ENCODE measurements at regions of chr19 and their contacts with region 1.

Region 1: DNA sequence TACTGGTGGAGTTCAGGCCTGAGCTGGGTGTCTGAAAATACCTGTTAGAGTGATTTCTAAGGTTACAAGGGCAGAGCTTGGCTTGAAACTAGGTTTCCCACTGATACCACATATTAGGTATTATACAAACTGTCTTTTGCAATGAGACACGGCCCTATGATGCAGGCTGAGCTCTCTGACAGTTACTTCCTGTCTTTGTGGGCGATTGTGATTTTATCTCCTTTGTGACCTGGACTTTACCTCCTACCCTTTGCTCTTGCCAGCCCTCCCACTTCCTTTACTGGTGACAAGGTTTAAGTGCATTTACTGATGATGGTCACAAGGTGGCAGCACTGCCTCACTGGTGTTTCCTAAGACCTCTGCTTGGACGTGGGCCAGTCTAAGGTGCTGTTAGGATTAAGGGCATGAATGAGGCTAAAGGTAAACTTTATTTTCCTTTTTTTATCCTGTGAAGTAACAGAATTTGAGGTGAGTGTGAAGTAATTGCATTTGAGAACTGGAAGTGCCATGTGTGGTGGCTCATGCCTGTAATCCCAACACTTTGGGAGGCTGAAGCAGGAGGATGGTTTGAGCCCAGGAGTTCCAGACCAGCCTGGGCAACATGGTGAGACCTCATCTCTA is 7.7 kb upstream of the CXCL17 start:
- DNase-seq: peak; percentile 38 to 72
- H3K4me3 ChIP-seq: no peak overlapping the region
- H3K27ac ChIP-seq: no peak overlapping the region
- H3K4me1 ChIP-seq: peaks cover 0 to 13% (median 5%) of the 10 kb centered on the region in 4 experiments; a peak in 4 of 7 replicates
- H3K27me3 ChIP-seq: no peaks in the 10 kb centered on the region; a peak in 1 of 7 replicates
- CTCF ChIP-seq: peak; percentile 71 to 95 (median 94)
- EP300 ChIP-seq: no peak
- POLR2A ChIP-seq: no peak
- RAD21 ChIP-seq: peak; percentile 98 to 100

Region 2: GRCh38 chr19:42268704-42269477 is 181.5 kb before region 1 on chr19 and contains the start of gene CIC:
- CTCF ChIA-PET with region 1: no interaction called
- POLR2A ChIA-PET with region 1: no interaction called
- DNase-seq: peak; percentile 99 to 100
- H3K4me3 ChIP-seq: peak within 1 kb of the TSS; percentile 75 to 99 (median 86)
- H3K27ac ChIP-seq: peak within 1 kb of the TSS; percentile 100
- H3K4me1 ChIP-seq: peaks cover 2 to 21% (median 10%) of the 10 kb centered on the region in 4 experiments
- H3K27me3 ChIP-seq: no peaks in the 10 kb centered on the region
- CTCF ChIP-seq: no peak
- EP300 ChIP-seq: no peak
- POLR2A ChIP-seq: no peak
- RAD21 ChIP-seq: no peak
- total RNA-seq, gene CIC: 43.6 and 48.4 TPM in 2 replicates

Region 3: GRCh38 chr19:42433503-42434260 is 16.7 kb before region 1 on chr19:
- CTCF ChIA-PET with region 1: interaction called, 19 read pairs
- POLR2A ChIA-PET with region 1: no interaction called
- DNase-seq: peak in 1 of 2 experiments; percentile 90
- H3K4me3 ChIP-seq: no peak overlapping the region
- H3K27ac ChIP-seq: no peak overlapping the region
- H3K4me1 ChIP-seq: peaks cover 0 to 2% (median 1%) of the 10 kb centered on the region in 4 experiments; a peak in 1 of 7 replicates
- H3K27me3 ChIP-seq: peaks cover 0 to 3% (median 0%) of the 10 kb centered on the region in 4 experiments; a peak in 2 of 7 replicates
- CTCF ChIP-seq: peak; percentile 87 to 98 (median 93)
- EP300 ChIP-seq: no peak
- POLR2A ChIP-seq: no peak
- RAD21 ChIP-seq: peak; percentile 89 to 90

Region 4: GRCh38 chr19:42468273-42468796 is 17.9 kb after region 1 on chr19:
- CTCF ChIA-PET with region 1: interaction called, 24 read pairs
- POLR2A ChIA-PET with region 1: interaction called, 4 read pairs
- DNase-seq: no peak
- H3K4me3 ChIP-seq: no peak overlapping the region
- H3K27ac ChIP-seq: no peak overlapping the region
- H3K4me1 ChIP-seq: peaks cover 11 to 20% (median 15%) of the 10 kb centered on the region in 4 experiments
- H3K27me3 ChIP-seq: no peaks in the 10 kb centered on the region
- CTCF ChIP-seq: no peak
- EP300 ChIP-seq: no peak
- POLR2A ChIP-seq: no peak
- RAD21 ChIP-seq: no peak

Region 5: DNA sequence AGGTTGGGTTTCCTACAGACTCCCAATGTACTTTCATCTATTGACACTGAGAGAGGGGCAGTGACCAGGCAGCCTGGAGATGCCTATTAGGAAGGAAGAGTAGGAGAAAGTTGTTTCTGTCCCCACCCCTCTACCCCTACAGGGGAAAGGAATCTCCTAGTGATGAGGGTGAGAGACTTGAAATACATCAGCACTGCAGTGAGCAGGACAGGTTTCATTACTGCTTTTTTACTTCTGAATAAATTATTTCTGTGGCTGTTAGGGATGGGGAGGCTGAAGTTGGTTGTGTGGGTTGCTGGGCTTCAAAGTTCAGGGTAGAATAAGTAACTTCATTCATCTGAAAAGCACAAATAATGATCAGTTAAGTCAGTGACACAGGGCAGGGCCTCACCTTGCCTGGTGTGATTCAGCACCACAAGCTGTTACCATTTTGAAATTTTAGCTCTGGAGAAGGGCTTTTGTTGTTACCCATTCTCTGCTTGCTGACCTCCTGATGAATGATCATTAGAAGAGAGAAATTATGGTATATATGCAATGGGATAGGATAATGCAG is 58.5 kb after region 1 on chr19:
- CTCF ChIA-PET with region 1: interaction called, 18 read pairs
- POLR2A ChIA-PET with region 1: no interaction called
- DNase-seq: no peak
- H3K4me3 ChIP-seq: no peak overlapping the region
- H3K27ac ChIP-seq: no peak overlapping the region
- H3K4me1 ChIP-seq: peaks cover 0 to 9% (median 2%) of the 10 kb centered on the region in 4 experiments; a peak in 2 of 7 replicates
- H3K27me3 ChIP-seq: no peaks in the 10 kb centered on the region; a peak in 1 of 7 replicates
- CTCF ChIP-seq: no peak
- EP300 ChIP-seq: no peak
- POLR2A ChIP-seq: no peak
- RAD21 ChIP-seq: no peak

Region 6: DNA sequence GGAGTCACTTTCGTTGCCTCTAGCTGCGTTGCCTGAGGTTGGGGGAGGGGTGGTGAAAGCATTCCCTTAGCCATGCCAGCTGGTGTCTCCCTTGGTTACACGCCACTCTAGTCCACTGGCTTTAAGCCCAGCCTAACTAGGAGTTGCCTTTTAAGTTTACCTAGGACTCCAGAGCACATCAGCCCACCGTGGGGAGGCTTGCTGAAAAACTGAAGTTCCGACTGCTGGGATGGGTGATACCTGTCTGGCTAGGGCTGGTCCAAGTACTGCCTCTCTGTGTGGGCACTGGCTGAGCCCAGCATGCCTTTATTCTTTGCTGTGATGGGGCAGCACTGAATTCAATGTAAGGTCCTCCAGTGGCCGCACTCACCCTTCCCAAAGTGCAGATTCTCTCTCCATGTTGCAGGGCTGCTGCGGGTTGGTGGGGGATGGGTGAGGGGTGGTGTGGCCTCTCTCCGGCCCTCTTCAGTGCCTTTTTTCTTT is 89.7 kb after region 1 on chr19:
- CTCF ChIA-PET with region 1: interaction called, 182 read pairs
- POLR2A ChIA-PET with region 1: no interaction called
- DNase-seq: peak in 1 of 2 experiments; percentile 61
- H3K4me3 ChIP-seq: peak overlapping the region in 1 of 4 experiments; percentile 18; a peak in 1 of 8 replicates
- H3K27ac ChIP-seq: no peak overlapping the region
- H3K4me1 ChIP-seq: peaks cover 4 to 12% (median 9%) of the 10 kb centered on the region in 4 experiments
- H3K27me3 ChIP-seq: no peaks in the 10 kb centered on the region; a peak in 3 of 7 replicates
- CTCF ChIP-seq: no peak
- EP300 ChIP-seq: no peak
- POLR2A ChIP-seq: no peak
- RAD21 ChIP-seq: no peak

Region 7: DNA sequence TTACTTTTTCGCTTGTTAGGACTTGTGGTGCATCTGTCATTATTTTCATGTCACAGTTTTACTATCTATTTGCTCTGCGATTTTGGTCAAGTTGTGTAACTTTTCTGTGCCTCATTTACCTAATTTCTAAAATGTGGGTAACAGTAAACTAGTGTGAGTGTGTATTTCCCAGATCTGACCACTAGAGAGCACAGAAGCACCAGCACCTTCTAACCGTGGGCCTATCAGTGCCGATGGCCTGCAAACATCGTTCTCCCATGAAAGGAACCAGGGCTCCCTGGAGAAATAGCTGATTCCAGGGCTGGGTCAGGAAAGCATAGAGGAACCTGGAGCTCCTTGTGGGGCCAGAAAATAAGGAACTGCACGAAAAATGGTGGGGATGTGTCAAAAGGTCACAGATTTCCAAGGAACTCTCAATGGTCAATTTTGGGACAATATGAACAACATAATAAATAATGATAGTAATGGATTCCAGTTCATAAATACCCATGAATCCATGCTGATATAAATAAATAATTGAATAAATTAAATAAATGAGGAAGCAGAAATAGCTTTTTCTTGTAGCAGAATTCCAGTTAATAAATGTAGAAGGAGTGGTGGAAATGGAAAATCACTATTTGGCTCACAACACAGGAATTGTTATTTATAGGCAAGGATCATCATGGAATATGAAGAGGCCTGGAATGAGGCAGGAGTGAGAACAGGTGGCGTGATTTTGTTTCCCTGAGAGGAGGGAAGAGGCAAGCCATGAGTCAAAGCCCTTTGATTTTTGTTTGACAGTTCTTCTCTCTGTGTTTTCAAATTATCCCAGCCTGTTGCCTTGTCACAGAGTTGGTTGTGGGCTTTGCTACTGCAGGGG is 113.2 kb after region 1 on chr19:
- CTCF ChIA-PET with region 1: interaction called, 51 read pairs
- POLR2A ChIA-PET with region 1: no interaction called
- DNase-seq: no peak
- H3K4me3 ChIP-seq: no peak overlapping the region
- H3K27ac ChIP-seq: no peak overlapping the region
- H3K4me1 ChIP-seq: peaks cover 2 to 8% (median 3%) of the 10 kb centered on the region in 4 experiments; a peak in 6 of 7 replicates
- H3K27me3 ChIP-seq: no peaks in the 10 kb centered on the region
- CTCF ChIP-seq: peak in 2 of 3 experiments; percentile 74 to 84; a peak in 3 of 4 replicates
- EP300 ChIP-seq: no peak
- POLR2A ChIP-seq: no peak
- RAD21 ChIP-seq: peak; percentile 72 to 75

Measured in H1 (cell line).